ENCODE measurements at regions of chr17 and their contacts with region 1.

Region 1: GRCh38 chr17:78798695-78799559 is 16.9 kb upstream of the CYTH1 start:
- DNase-seq: peak in 2 of 3 donors; percentile 54 to 58
- H3K4me3 ChIP-seq: no peak overlapping the region
- H3K27ac ChIP-seq: no peak overlapping the region
- H3K4me1 ChIP-seq: no peaks in the 10 kb centered on the region
- H3K27me3 ChIP-seq: no peaks in the 10 kb centered on the region

Region 2: GRCh38 chr17:78818932-78819331 is 20.0 kb after region 1 on chr17:
- CTCF ChIA-PET with region 1: interaction called, 14 read pairs
- POLR2A ChIA-PET with region 1: no interaction called
- DNase-seq: peak; percentile 92 to 96 (median 94)
- H3K4me3 ChIP-seq: peak overlapping the region in 2 of 7 experiments; percentile 47 to 55
- H3K27ac ChIP-seq: peak overlapping the region; percentile 55 to 79
- H3K4me1 ChIP-seq: peaks cover 19 to 41% (median 33%) of the 10 kb centered on the region in 4 experiments
- H3K27me3 ChIP-seq: no peaks in the 10 kb centered on the region

Measured in common myeloid progenitor, CD34-positive (primary cell).